GM12878 (cell line): ENCODE measurements at regions of chr15 and their contacts with region 1.

Region 1: GRCh38 chr15:85412956-85413854 is 32.8 kb downstream of the AKAP13 start:
- DNase-seq: peak; percentile 96
- ATAC-seq: peak; percentile 97
- H3K4me3 ChIP-seq: peak overlapping the region; percentile 33; the same call in 1 of the 2 replicates
- H3K27ac ChIP-seq: peak overlapping the region; percentile 94
- H3K4me1 ChIP-seq: peaks cover 64% of the 10 kb centered on the region
- H3K27me3 ChIP-seq: no peaks in the 10 kb centered on the region
- CTCF ChIP-seq: peak in 2 of 3 experiments; percentile 6 to 29; a peak in 3 of 6 replicates
- EP300 ChIP-seq: peak; percentile 93 to 94
- POLR2A ChIP-seq: peak; percentile 21; the same call in 1 of the 2 replicates
- RAD21 ChIP-seq: peak; percentile 32; the same call in 1 of the 2 replicates

Region 2: DNA sequence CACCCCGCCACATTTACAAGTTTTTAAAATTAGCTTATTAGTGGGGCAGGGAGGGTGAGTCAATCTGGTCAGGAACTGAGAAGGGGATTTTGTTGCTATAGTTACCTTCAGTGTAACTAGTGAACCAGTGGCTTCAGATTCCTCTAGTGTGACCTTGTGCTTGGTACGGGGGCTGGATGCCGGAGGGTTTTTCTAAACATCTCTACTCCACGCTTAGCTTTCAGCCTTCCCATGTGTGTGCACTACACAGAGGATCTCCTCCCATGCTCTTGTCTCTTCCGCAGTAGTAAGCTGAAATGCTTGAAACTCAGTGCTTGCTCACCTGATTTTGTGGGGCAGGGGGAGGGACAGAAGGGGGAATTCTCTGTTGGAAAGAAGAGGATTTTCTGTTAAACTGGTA is 100.7 kb before region 1 on chr15:
- CTCF ChIA-PET with region 1: interaction called, 48 read pairs
- POLR2A ChIA-PET with region 1: interaction called, 16 read pairs
- RAD21 ChIA-PET with region 1: interaction called, 112 read pairs
- SMC1A ChIA-PET with region 1: interaction called, 78 read pairs
- in situ Hi-C with region 1: no loop called
- intact Hi-C with region 1: no loop called
- DNase-seq: peak; percentile 77
- ATAC-seq: peak; percentile 98
- H3K4me3 ChIP-seq: peak overlapping the region; percentile 39
- H3K27ac ChIP-seq: peak overlapping the region; percentile 84
- H3K4me1 ChIP-seq: peaks cover 36% of the 10 kb centered on the region
- H3K27me3 ChIP-seq: no peaks in the 10 kb centered on the region
- CTCF ChIP-seq: no peak
- EP300 ChIP-seq: peak in 1 of 2 experiments; percentile 41; a peak in 1 of 4 replicates
- POLR2A ChIP-seq: peak; percentile 38; the same call in 1 of the 2 replicates
- RAD21 ChIP-seq: no peak

Region 3: GRCh38 chr15:85337425-85338074 is 75.7 kb before region 1 on chr15:
- CTCF ChIA-PET with region 1: interaction called, 119 read pairs
- POLR2A ChIA-PET with region 1: interaction called, 24 read pairs
- RAD21 ChIA-PET with region 1: interaction called, 202 read pairs
- SMC1A ChIA-PET with region 1: interaction called, 14 read pairs
- in situ Hi-C with region 1: loop called (anchors 5 kb)
- intact Hi-C with region 1: no loop called
- DNase-seq: no peak
- ATAC-seq: no peak
- H3K4me3 ChIP-seq: no peak overlapping the region
- H3K27ac ChIP-seq: no peak overlapping the region
- H3K4me1 ChIP-seq: no peaks in the 10 kb centered on the region
- H3K27me3 ChIP-seq: no peaks in the 10 kb centered on the region
- CTCF ChIP-seq: no peak
- EP300 ChIP-seq: no peak
- POLR2A ChIP-seq: no peak
- RAD21 ChIP-seq: no peak

Region 4: DNA sequence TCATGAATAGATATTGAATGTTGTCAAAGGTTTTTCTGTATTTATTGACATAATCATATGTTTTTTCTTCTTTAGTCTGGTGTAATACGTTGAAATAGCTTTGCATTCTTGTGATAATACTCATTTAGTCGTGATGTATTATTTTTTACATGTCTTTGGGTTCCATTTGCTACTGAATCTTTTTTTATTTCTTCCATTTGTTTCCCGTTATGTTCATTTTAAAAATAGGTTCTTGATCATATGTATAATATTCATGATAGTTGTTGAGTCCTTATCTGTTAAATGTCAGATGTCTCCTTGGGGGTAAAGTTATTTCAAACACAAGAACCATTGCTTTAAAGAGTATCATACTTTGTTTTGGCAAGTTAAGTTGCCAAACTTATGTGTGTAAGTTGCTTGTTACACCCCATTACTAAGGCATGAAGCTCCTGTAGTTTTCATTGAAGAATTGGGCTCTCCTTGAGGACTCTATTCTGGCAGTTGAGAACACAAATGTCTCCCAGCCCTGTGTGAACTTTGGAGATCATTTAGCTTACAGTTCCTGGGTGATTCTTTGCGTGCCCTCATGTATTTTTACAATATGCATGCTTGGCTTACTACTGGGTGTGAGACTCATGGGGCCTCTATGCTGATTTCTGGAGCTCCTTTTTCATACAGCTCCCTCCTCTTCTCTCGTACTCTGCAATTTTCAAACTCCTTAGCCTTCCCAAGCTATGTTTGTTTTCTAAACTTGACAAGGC is 24.5 kb before region 1 on chr15:
- CTCF ChIA-PET with region 1: interaction called, 80 read pairs
- POLR2A ChIA-PET with region 1: interaction called, 47 read pairs
- RAD21 ChIA-PET with region 1: interaction called, 121 read pairs
- SMC1A ChIA-PET with region 1: interaction called, 37 read pairs
- in situ Hi-C with region 1: no loop called
- intact Hi-C with region 1: no loop called
- DNase-seq: no peak
- ATAC-seq: no peak; the same call in 2 of the 3 replicates
- H3K4me3 ChIP-seq: peak overlapping the region; percentile 49; the same call in 1 of the 2 replicates
- H3K27ac ChIP-seq: no peak overlapping the region
- H3K4me1 ChIP-seq: peaks cover 24% of the 10 kb centered on the region
- H3K27me3 ChIP-seq: no peaks in the 10 kb centered on the region
- CTCF ChIP-seq: no peak
- EP300 ChIP-seq: no peak
- POLR2A ChIP-seq: no peak
- RAD21 ChIP-seq: no peak

Region 5: GRCh38 chr15:85430406-85431204 is 17.4 kb after region 1 on chr15:
- CTCF ChIA-PET with region 1: interaction called, 18 read pairs
- POLR2A ChIA-PET with region 1: interaction called, 4 read pairs
- RAD21 ChIA-PET with region 1: interaction called, 3 read pairs
- SMC1A ChIA-PET with region 1: interaction called, 41 read pairs
- in situ Hi-C with region 1: no loop called
- intact Hi-C with region 1: no loop called
- DNase-seq: peak; percentile 53
- ATAC-seq: peak; percentile 99
- H3K4me3 ChIP-seq: no peak overlapping the region
- H3K27ac ChIP-seq: peak overlapping the region; percentile 20
- H3K4me1 ChIP-seq: peaks cover 30% of the 10 kb centered on the region
- H3K27me3 ChIP-seq: no peaks in the 10 kb centered on the region
- CTCF ChIP-seq: no peak
- EP300 ChIP-seq: no peak
- POLR2A ChIP-seq: no peak
- RAD21 ChIP-seq: no peak

Region 6: DNA sequence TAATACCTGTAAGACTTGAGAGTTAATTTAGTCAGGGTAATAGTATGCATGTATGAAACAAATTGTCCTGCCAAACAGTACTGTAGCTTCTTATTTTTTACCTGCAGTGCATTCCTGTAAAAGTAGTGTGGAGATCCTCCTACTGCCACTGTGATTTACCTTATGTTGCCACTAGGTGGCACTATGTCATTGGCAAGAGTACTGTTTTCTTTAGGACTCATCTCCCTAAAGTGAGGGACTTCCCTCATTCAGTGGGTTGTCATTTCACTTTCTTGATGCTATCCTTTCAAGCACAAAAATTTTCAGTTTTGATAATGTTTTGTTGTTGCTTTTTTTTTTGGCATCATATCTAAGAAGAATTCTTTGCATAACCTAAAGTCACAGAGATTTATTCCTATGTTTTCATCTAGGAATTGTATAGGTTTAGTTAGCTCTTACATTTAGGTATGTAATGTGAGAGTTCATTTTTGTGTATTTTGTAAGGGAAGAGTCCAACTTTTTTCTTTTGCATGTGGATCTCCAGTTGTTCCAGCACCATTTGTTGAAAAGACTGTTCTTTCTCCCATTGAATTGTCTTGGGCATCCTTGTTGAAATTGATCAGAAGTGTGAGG is 72.9 kb after region 1 on chr15:
- CTCF ChIA-PET with region 1: interaction called, 25 read pairs
- POLR2A ChIA-PET with region 1: no interaction called
- RAD21 ChIA-PET with region 1: interaction called, 32 read pairs
- SMC1A ChIA-PET with region 1: interaction called, 34 read pairs
- in situ Hi-C with region 1: no loop called
- intact Hi-C with region 1: no loop called
- DNase-seq: peak; percentile 59
- ATAC-seq: peak; percentile 69
- H3K4me3 ChIP-seq: no peak overlapping the region
- H3K27ac ChIP-seq: no peak overlapping the region
- H3K4me1 ChIP-seq: peaks cover 35% of the 10 kb centered on the region
- H3K27me3 ChIP-seq: no peaks in the 10 kb centered on the region
- CTCF ChIP-seq: peak; percentile 64 to 76 (median 67)
- EP300 ChIP-seq: no peak
- POLR2A ChIP-seq: no peak
- RAD21 ChIP-seq: peak; percentile 86

Region 7: DNA sequence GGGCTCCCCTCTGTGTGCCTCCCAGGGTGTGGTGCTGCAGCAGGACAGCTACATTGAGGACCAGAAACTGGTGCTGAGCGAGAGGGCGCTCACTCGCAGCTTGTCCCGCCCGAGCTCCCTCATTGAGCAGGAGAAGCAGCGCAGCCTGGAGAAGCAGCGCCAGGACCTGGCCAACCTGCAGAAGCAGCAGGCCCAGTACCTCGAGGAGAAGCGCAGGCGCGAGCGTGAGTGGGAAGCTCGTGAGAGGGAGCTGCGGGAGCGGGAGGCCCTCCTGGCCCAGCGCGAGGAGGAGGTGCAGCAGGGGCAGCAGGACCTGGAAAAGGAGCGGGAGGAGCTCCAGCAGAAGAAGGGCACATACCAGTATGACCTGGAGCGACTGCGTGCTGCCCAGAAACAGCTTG is 327.8 kb after region 1 on chr15:
- CTCF ChIA-PET with region 1: no interaction called
- POLR2A ChIA-PET with region 1: no interaction called
- RAD21 ChIA-PET with region 1: no interaction called
- SMC1A ChIA-PET with region 1: no interaction called
- in situ Hi-C with region 1: no loop called
- intact Hi-C with region 1: no loop called
- DNase-seq: no peak
- ATAC-seq: no peak
- H3K4me3 ChIP-seq: no peak overlapping the region
- H3K27ac ChIP-seq: no peak overlapping the region
- H3K4me1 ChIP-seq: no peaks in the 10 kb centered on the region
- H3K27me3 ChIP-seq: no peaks in the 10 kb centered on the region
- CTCF ChIP-seq: no peak
- EP300 ChIP-seq: no peak
- POLR2A ChIP-seq: peak; percentile 44; the same call in 1 of the 2 replicates
- RAD21 ChIP-seq: no peak